GM12878 (cell line): ENCODE measurements at regions of chr3 and their contacts with region 1.

Region 1: GRCh38 chr3:167899093-167899492 is 163.6 kb downstream of the SERPINI1 start:
- DNase-seq: no peak
- ATAC-seq: no peak
- H3K4me3 ChIP-seq: no peak overlapping the region
- H3K27ac ChIP-seq: no peak overlapping the region
- H3K4me1 ChIP-seq: no peaks in the 10 kb centered on the region
- H3K27me3 ChIP-seq: no peaks in the 10 kb centered on the region
- CTCF ChIP-seq: no peak
- EP300 ChIP-seq: no peak
- POLR2A ChIP-seq: no peak
- RAD21 ChIP-seq: no peak

Region 2: GRCh38 chr3:167406875-167407492 is 492.1 kb before region 1 on chr3:
- CTCF ChIA-PET with region 1: no interaction called
- POLR2A ChIA-PET with region 1: no interaction called
- RAD21 ChIA-PET with region 1: no interaction called
- SMC1A ChIA-PET with region 1: no interaction called
- in situ Hi-C with region 1: loop called (anchors 10 kb)
- intact Hi-C with region 1: no loop called
- DNase-seq: no peak
- ATAC-seq: peak; percentile 60; the same call in 2 of the 3 replicates
- H3K4me3 ChIP-seq: no peak overlapping the region
- H3K27ac ChIP-seq: no peak overlapping the region
- H3K4me1 ChIP-seq: no peaks in the 10 kb centered on the region
- H3K27me3 ChIP-seq: no peaks in the 10 kb centered on the region
- CTCF ChIP-seq: peak; percentile 6 to 40 (median 23); a peak in 3 of 6 replicates
- EP300 ChIP-seq: no peak
- POLR2A ChIP-seq: no peak
- RAD21 ChIP-seq: peak; percentile 49; the same call in 1 of the 2 replicates